RWPE1 (cell line): ENCODE measurements at regions of chr7 and their contacts with region 1.

Region 1: DNA sequence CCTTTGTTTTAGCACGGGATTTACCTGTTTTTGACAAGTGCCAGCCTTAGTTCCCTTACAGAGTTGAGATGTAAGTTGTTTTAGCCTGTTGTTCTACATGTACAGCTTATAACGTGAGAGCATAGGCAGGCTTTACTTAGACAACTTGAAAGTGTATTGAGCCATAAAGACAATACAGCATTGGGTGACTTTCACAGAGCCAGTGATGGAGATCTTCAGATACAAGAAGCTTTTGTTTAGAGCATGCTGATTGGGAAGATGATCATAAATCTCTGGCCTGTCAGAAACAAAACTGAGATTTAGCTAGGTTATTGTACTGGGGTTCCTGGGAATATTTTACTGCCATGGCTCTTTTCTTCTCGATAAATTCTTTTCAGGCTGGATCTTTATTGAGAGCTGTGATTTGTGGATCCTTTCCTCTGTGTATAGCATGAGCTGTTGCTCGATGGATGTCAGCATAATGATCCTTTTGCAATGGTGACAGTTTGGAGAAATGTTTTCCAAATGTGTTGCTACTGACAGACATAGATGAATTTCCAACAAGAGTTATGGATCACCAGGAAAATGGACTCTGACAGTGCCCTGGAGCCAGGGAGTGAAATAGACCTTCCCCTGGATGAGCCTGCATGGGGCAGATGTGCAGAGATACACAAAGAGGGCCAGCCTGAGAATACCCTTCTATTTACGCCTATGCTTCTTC is 30.2 kb downstream of the LHFPL3 start:
- DNase-seq: no peak
- H3K27ac ChIP-seq: no peak overlapping the region
- CTCF ChIP-seq: no peak

Region 2: DNA sequence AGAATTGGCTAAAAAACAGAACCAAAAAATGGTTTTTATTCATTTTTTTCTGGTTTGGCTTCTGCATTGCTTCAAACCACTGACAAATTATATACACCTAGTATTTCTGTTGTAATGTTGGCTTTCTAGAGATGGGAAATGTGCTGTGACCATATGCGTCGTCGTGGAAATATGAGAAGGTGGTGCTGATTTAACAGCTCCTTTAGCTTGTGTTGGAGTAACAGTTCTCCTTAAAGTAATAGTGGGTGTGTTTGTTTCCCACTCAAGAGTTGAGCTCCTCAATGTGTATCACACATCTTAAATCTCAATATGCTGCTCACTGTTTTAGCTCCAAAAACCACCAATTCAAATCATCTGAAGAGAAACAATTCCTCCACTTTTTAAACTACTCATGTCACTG is 166.3 kb after region 1 on chr7:
- CTCF ChIA-PET with region 1: interaction called, 10 read pairs
- POLR2A ChIA-PET with region 1: no interaction called
- DNase-seq: no peak
- H3K27ac ChIP-seq: no peak overlapping the region
- CTCF ChIP-seq: no peak